Upper lobe of right lung (tissue), 1 donor: ENCODE measurements at regions of chr19 and their contacts with region 1.

Region 1: DNA sequence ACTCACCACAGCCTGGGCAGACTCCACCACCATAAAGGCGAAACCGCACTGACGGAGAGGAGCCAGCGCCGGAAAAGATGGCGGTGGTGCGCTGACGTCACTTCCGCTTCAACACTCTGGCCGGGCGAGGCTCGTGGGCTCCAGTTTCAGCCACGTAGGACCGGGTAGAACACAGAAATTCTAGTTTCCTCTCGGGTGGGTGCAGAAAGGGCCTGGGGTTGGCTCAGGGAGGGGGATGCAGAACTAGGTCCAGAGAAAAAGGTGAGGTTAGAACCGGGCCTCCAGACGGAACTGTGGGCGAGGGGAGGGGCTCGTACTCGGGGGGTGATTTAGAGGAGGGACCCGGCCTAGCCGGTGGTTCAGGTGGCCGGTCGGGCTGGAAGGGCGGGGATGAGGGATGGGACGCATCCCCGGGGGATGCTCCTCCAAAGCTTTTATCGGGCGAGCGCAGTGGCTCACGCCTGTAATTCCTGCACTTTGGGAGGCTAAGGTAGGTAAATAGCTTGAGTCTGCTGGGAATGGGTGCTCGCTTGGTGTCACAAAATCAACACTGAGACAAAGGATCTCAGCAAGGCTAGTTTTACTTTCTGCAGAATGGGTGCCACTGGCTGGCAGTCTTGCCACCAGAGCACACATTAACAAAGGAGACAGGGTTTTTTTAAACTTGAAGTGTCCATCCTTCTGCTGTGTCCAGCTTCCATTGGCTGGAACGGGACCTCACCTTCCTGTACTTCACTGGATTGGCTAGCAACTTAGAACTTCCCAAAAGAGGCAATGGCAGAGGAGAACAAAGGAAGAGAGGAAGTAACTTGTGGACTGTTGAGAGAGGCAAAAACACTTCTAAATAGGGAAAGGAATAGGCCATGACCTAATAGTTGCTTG is at the start of gene ZNF561:
- DNase-seq: peak; percentile 92
- ATAC-seq: peak; percentile 95
- H3K4me3 ChIP-seq: peak within 1 kb of the TSS; percentile 96
- H3K27ac ChIP-seq: peak within 1 kb of the TSS; percentile 93
- H3K4me1 ChIP-seq: peaks cover 16% of the 10 kb centered on the region
- H3K27me3 ChIP-seq: no peaks in the 10 kb centered on the region
- CTCF ChIP-seq: no peak
- total RNA-seq, gene ZNF561: 34.7 TPM

Region 2: DNA sequence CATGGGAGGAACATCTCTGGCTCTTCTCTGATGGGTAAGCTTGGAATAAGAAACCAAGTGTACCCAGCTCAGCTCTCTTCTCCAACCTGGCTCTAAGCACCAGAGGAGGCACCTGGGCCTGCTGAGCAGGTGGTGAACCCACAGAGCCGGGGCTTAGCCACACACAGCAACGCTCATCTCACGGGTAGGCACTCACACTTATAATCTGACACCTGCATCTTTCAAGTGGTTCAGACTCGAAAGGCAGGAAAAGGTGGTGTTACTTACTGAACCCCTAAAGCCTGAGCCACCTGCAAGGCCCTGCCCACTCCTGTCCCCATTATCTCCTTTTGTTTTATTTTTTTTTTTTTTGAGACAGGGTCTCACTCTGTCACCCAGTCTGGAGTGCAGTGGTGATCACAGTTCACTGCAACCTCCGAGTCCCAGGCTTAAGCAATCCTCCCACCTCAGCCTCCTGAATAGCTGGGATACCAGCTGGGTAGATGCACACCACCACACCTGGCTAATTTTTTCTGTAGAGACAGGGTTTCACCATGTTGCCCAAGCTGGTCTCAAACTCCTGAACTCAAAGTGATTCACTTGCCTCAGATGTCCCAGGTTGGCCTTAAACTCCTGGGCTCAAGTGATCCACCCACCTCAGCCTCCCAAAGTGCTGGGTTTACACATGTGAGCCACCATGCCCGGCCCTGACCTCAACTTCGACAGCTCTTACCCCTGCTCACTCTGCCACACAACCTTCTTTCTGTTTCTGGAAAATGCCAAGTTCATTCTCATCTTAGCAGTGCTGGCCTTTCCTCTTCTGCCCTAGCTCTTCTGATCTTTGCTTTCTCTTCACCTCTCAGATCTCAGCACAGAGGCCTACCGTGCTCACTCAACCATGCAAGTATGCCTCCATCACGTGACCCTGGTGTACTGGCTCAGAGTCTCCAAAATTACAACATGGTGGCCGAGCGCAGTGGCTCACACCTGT is 187.7 kb after region 1 on chr19:
- intact Hi-C with region 1: loop called (anchors 10 kb)
- DNase-seq: no peak
- ATAC-seq: no peak
- H3K4me3 ChIP-seq: no peak overlapping the region
- H3K27ac ChIP-seq: no peak overlapping the region
- H3K4me1 ChIP-seq: no peaks in the 10 kb centered on the region
- H3K27me3 ChIP-seq: no peaks in the 10 kb centered on the region
- CTCF ChIP-seq: no peak